Activated naive CD4-positive, alpha-beta T cell treated with anti-CD3 and anti-CD28 coated beads for 36 hours (primary cell): ENCODE measurements at regions of chr12 and their contacts with region 1.

Region 1: DNA sequence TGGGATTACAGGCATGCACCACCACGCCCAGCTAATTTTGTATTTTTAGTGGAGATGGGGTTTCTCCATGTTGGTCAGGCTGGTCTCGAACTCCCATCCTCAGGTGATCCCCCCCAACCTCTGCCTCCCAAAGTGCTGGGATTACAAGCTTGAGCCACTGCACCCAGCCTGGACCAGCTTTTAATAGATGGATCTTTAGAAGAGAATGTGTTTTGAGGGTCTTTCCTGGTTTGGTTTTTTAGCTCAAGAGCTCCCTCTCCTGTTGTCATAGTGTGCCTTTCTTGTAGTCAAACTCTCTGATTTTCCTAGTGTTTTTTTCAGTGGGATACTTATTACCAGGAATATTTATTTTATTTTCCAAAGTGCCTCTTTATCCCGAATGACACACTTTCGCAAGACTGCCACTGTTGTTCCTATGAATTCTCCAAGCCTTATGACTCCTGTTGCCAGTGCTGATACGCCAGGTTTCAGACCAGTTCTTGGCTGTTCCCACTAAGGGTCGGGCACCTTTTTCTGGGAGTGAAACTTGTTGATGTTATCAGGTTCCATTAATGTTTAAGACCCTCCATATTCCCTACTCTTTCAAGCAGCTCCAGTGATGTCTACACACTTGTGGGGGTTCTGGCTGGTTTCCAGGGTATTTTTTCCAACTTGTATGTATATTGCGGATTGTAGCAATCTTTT is 31.5 kb upstream of the LIMA1 start:
- DNase-seq: no peak
- H3K4me3 Mint-ChIP-seq: no peak overlapping the region
- H3K27ac Mint-ChIP-seq: no peak overlapping the region
- H3K4me1 Mint-ChIP-seq: no peaks in the 10 kb centered on the region
- H3K27me3 Mint-ChIP-seq: no peaks in the 10 kb centered on the region

Region 2: DNA sequence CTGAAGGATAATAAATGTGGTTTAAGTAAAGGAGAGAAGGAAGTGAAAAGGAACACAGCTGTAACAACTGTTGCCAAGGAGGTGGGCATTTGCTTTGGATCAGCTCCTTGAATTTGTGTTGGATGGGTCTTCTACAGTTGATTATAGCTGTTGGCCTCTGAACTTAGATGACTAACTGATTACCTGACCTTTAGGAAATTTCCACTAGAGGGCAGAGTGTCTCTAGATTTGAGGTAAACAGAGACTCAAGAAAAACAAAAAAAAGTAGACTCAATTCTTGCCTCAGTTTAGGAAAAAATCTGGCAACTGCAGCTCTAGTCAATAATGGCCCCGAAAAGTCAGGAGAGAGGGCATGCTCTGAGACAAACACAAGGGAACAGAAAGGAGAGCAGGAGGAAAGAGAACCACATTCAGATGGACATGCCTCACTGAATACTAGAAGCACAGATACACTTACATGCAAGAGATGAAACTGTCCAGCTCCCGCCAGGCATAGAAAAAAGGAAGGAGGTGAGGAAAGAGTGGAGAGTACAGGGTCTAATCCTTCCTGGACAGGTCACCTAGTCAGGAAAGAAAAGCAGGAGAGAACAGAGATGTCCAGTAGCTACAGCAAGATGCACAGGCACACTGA is 182.2 kb before region 1 on chr12:
- CTCF ChIA-PET with region 1: interaction called, 4 read pairs
- intact Hi-C with region 1: loop called (anchors 2 kb)
- DNase-seq: no peak
- H3K4me3 Mint-ChIP-seq: no peak overlapping the region
- H3K27ac Mint-ChIP-seq: peak overlapping the region; percentile 81
- H3K4me1 Mint-ChIP-seq: peaks cover 8% of the 10 kb centered on the region
- H3K27me3 Mint-ChIP-seq: no peaks in the 10 kb centered on the region

Region 3: DNA sequence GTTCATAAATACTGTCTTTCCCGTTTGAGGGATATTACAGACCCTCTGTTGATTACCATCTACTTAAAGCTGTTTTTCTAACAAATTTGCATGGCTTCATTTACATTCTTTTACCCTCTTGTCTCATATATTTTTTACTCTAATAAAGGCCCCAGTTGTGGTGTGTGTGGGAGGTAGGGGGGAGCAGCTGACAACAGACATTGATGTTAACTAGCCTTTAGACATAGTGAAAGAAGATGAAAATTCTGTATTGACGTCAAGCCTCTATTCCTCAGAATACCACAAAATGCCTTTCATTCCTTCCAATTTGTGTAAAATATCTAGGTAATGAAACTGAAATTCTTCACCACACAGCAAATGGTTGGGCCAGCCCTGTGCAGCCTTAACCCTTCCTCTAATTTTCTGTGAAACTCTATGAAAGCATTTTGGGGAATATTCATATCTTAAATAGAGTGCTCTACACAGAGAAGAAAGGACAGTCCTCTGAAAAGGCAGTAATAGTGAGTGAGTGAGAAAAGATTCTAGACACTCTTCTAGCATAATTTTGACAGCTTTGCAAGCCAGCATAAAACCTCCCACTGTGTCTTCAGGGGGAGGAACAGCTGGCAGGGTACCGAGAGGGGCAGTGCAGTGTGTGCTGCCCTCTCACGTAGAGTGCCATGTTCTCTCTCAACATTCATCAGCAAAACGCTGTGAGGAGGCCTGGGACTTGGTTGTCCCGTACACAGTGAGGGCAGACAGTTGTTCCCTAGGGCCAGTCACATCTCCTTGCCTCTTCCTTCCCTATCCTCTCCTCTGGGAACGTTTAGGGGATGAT is 127.5 kb before region 1 on chr12:
- CTCF ChIA-PET with region 1: interaction called, 7 read pairs
- intact Hi-C with region 1: loop called (anchors 1 kb)
- DNase-seq: peak; percentile 45
- H3K4me3 Mint-ChIP-seq: no peak overlapping the region
- H3K27ac Mint-ChIP-seq: peak overlapping the region; percentile 61
- H3K4me1 Mint-ChIP-seq: peaks cover 29% of the 10 kb centered on the region
- H3K27me3 Mint-ChIP-seq: no peaks in the 10 kb centered on the region

Region 4: GRCh38 chr12:50211392-50212070 is 103.2 kb before region 1 on chr12:
- CTCF ChIA-PET with region 1: interaction called, 12 read pairs
- intact Hi-C with region 1: loop called (anchors 1 kb)
- DNase-seq: peak; percentile 38
- H3K4me3 Mint-ChIP-seq: peak overlapping the region; percentile 10
- H3K27ac Mint-ChIP-seq: peak overlapping the region; percentile 88
- H3K4me1 Mint-ChIP-seq: peaks cover 40% of the 10 kb centered on the region
- H3K27me3 Mint-ChIP-seq: no peaks in the 10 kb centered on the region